ENCODE measurements at regions of chr2 and their contacts with region 1.

Region 1: GRCh38 chr2:27380626-27381545 is at the start of gene ZNF513:
- DNase-seq: peak; percentile 92
- ATAC-seq: peak; percentile 90
- H3K4me3 Mint-ChIP-seq: peak within 1 kb of the TSS; percentile 81
- H3K27ac Mint-ChIP-seq: peak within 1 kb of the TSS; percentile 97
- H3K4me1 Mint-ChIP-seq: peaks cover 24% of the 10 kb centered on the region
- H3K27me3 Mint-ChIP-seq: no peaks in the 10 kb centered on the region
- CTCF ChIP-seq: no peak
- total RNA-seq, gene ZNF513: 6.8 to 7.2 TPM

Region 2: GRCh38 chr2:27356382-27357181 is 24.3 kb before region 1 on chr2 and contains the start of gene GTF3C2:
- CTCF ChIA-PET with region 1: no interaction called
- POLR2A ChIA-PET with region 1: interaction called, 17 read pairs
- intact Hi-C with region 1: no loop called
- DNase-seq: peak; percentile 98
- ATAC-seq: peak; percentile 79
- H3K4me3 Mint-ChIP-seq: peak within 1 kb of the TSS; percentile 94
- H3K27ac Mint-ChIP-seq: peak within 1 kb of the TSS; percentile 99
- H3K4me1 Mint-ChIP-seq: peaks cover 48% of the 10 kb centered on the region
- H3K27me3 Mint-ChIP-seq: no peaks in the 10 kb centered on the region
- CTCF ChIP-seq: no peak
- total RNA-seq, gene GTF3C2: 57.6 to 63.6 TPM

Region 3: DNA sequence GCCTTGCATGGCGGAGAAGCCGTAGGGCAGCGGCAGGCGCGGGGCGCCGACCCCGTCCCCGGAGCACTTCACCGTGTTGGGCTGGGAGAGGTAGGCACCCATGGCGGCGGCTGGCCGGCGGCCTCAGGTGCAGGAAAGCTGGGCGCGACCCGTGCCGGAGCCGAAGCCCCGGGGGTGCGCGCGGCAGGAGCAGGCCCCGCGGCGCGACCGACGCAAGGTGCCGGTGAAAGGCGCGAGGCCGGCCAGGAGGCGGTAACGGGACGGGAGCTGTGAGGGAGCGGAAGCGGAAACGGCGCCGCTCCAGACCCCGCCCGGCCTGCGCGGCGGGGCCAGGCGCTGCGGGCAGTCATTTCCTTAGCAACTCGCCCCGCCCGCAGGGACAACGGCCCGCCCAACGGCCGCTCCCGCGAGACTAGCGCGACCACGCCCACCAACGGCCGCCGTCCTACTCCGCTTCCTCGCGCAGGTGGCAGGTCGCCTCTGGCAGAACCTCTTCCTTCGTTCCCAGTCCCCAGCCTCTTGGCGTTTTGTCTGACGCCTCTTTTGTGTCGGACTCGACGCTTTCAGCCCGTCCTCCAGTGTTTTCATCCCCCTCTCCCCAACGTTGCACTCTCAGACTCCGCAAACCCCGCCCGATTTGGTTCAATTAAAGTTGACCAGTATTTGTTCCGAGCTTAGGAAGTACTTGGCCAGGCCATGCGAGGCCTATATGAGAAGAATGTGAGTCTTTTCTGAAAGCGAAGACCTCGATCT is 28.6 kb after region 1 on chr2 and contains the start of gene PPM1G:
- CTCF ChIA-PET with region 1: no interaction called
- POLR2A ChIA-PET with region 1: interaction called, 29 read pairs
- intact Hi-C with region 1: no loop called
- DNase-seq: peak; percentile 96
- ATAC-seq: peak; percentile 98
- H3K4me3 Mint-ChIP-seq: peak within 1 kb of the TSS; percentile 86
- H3K27ac Mint-ChIP-seq: peak within 1 kb of the TSS; percentile 90
- H3K4me1 Mint-ChIP-seq: peaks cover 36% of the 10 kb centered on the region
- H3K27me3 Mint-ChIP-seq: peaks cover 2% of the 10 kb centered on the region
- CTCF ChIP-seq: no peak
- total RNA-seq, gene PPM1G: 138 to 142 TPM

Region 4: DNA sequence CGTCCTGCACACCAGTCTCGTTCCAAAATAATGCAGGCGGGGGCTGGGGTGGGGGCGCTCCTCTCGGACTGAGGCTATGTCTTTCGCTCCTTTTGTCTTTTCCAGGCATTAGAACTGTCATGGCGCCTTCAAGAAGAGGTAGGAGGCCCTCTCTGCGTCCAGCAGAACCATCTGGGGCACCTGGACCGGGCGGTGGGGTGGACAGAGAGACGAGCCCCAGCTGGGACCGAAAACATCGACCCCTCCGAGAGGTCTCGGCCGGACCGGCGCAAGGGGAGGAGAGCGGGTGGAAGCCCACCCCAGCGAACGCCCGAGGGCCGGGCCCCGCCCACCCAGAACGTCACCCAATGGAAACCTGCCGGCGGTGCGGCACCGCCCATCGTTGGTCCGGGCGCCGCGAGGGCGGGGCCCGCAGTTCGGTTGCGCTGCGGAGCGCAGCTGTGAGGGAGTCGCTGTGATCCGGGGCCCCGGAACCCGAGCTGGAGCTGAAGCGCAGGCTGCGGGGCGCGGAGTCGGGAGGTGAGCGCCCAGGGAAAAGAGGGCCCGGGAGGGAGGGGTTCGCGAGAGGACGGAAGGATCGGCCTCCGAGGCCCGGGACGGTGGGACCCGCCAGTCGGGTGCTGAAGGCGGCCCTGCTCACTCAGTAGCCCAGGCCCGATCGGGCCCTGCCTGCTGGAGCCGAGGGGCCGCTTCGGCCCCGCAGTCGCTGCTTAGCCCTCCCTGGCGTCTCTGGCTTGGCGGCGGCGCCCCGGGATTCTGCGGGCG is 47.5 kb after region 1 on chr2 and contains the start of gene NRBP1:
- CTCF ChIA-PET with region 1: interaction called, 6 read pairs
- POLR2A ChIA-PET with region 1: interaction called, 32 read pairs
- intact Hi-C with region 1: no loop called
- DNase-seq: peak; percentile 93
- ATAC-seq: peak; percentile 87
- H3K4me3 Mint-ChIP-seq: peak within 1 kb of the TSS; percentile 98
- H3K27ac Mint-ChIP-seq: peak within 1 kb of the TSS; percentile 97
- H3K4me1 Mint-ChIP-seq: peaks cover 21% of the 10 kb centered on the region
- H3K27me3 Mint-ChIP-seq: no peaks in the 10 kb centered on the region
- CTCF ChIP-seq: no peak
- total RNA-seq, gene NRBP1: 60.5 to 62.1 TPM